A549 (cell line): ENCODE measurements at regions of chr13 and their contacts with region 1.

Region 1: DNA sequence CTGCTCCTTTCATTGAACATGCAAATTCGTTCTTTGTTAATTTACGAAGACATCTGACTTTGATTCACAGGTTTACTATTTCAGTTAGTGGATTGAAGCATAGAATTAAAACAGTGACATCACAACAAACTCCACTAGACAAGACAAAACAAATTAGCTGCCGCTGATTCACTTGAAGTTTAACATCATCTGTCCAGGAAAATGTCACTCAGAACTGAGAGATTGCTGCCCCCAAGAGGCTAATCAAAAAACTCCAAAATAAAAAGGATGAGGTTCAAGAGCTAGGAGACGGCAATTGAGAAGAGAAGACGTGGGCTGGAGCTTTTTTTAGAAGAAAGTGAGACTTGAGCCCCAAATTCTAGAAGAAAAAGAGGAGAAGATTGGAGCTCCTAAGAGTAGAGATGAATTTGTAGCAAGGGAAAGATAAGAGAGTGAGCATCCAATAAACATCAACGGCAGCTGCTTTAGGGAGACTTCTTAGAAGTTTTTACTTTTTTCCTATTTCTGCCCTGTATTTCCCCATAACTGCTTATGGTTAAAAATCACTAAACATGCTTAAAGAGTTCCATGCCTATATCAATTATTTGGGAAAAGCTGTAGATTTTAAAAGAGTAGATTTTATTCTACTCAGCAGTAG is 40.8 kb upstream of the TPP2 start:
- DNase-seq: peak; percentile 15 to 30
- ATAC-seq: peak; percentile 83 to 87; a peak in 4 of 6 replicates
- H3K4me3 ChIP-seq: no peak overlapping the region
- H3K27ac ChIP-seq: no peak overlapping the region
- H3K4me1 ChIP-seq: no peaks in the 10 kb centered on the region
- CTCF ChIP-seq: peak; percentile 60
- EP300 ChIP-seq: no peak
- POLR2A ChIP-seq: no peak
- RAD21 ChIP-seq: peak; percentile 61 to 64

Region 2: GRCh38 chr13:102141625-102142472 is 414.2 kb before region 1 on chr13:
- CTCF ChIA-PET with region 1: interaction called, 15 read pairs
- POLR2A ChIA-PET with region 1: no interaction called
- DNase-seq: peak; percentile 1 to 4
- ATAC-seq: no peak
- H3K4me3 ChIP-seq: no peak overlapping the region
- H3K27ac ChIP-seq: no peak overlapping the region
- H3K4me1 ChIP-seq: no peaks in the 10 kb centered on the region
- CTCF ChIP-seq: peak; percentile 53
- EP300 ChIP-seq: no peak
- POLR2A ChIP-seq: no peak
- RAD21 ChIP-seq: peak; percentile 37 to 42; a peak in 3 of 5 replicates

Region 3: DNA sequence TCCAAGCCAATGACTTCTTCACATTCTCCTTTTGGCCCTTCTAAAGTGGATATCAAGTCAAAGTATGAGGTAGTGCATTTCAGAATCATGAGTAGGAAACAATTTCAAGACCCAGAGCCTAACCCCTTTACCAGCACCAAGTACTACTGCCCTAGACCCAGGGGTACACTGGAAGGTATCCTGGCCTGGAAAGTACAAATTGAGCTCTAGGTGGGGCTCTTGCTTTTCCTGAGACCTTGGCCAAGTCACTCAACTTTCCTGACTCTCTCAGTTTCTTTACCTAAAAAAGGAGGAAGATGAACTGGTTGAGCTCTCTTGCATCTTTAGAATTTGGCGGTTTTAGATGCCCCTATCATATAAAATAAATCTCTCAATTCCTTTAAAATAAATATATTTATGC is 358.8 kb before region 1 on chr13:
- CTCF ChIA-PET with region 1: no interaction called
- POLR2A ChIA-PET with region 1: no interaction called
- DNase-seq: peak in 1 of 2 experiments; percentile 9
- ATAC-seq: peak in 1 of 2 experiments; percentile 52; a peak in 1 of 6 replicates
- H3K4me3 ChIP-seq: no peak overlapping the region
- H3K27ac ChIP-seq: no peak overlapping the region
- H3K4me1 ChIP-seq: no peaks in the 10 kb centered on the region
- CTCF ChIP-seq: no peak
- EP300 ChIP-seq: no peak
- POLR2A ChIP-seq: no peak
- RAD21 ChIP-seq: peak; percentile 16 to 51; a peak in 2 of 5 replicates

Region 4: DNA sequence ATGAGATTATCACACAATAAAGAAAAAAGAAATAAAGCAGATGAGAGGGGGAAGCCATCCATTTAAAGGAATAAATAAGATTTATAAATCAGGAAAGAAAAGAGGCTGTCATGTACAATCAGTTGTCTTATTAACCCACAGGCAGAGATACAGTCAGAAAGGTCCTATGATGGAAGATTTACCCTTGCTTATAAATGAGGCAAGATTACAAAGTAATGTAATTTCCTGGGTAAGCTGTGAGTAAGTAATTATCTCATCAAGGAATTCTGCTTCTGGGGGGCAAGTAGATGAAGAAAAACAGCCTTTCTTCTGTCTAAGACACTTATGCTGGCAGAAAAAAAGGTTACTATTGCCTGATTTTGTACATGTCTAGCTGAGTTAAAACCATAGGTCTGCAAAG is 300.6 kb before region 1 on chr13:
- CTCF ChIA-PET with region 1: no interaction called
- POLR2A ChIA-PET with region 1: no interaction called
- DNase-seq: no peak
- ATAC-seq: no peak
- H3K4me3 ChIP-seq: no peak overlapping the region
- H3K27ac ChIP-seq: no peak overlapping the region
- H3K4me1 ChIP-seq: no peaks in the 10 kb centered on the region
- CTCF ChIP-seq: no peak
- EP300 ChIP-seq: no peak
- POLR2A ChIP-seq: no peak
- RAD21 ChIP-seq: no peak

Region 5: DNA sequence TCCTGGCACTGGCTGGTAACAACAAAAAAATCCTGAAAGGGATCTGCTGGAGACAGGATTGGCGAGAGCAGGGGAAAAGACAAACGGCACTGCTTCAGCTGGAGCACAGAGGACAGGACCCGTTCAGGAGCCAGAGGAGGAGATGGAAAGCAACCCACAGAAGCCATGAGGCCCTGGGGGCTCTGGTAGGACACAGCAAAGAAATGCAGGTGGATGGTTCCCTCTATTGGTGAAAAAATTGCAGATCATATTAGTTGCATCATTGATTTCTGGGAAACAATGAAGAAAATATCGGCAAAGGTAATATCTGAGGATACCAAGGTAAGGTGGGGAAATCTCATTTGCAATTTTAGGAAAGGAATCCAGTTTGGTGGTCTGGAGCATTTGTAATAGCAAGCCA is 15.0 kb after region 1 on chr13:
- CTCF ChIA-PET with region 1: interaction called, 12 read pairs
- POLR2A ChIA-PET with region 1: no interaction called
- DNase-seq: no peak
- ATAC-seq: no peak
- H3K4me3 ChIP-seq: no peak overlapping the region
- H3K27ac ChIP-seq: no peak overlapping the region
- H3K4me1 ChIP-seq: no peaks in the 10 kb centered on the region
- CTCF ChIP-seq: no peak
- EP300 ChIP-seq: no peak
- POLR2A ChIP-seq: no peak
- RAD21 ChIP-seq: peak in 1 of 2 experiments; percentile 23; a peak in 1 of 5 replicates